PC-9 (cell line): ENCODE measurements at regions of chr17 and their contacts with region 1.

Region 1: DNA sequence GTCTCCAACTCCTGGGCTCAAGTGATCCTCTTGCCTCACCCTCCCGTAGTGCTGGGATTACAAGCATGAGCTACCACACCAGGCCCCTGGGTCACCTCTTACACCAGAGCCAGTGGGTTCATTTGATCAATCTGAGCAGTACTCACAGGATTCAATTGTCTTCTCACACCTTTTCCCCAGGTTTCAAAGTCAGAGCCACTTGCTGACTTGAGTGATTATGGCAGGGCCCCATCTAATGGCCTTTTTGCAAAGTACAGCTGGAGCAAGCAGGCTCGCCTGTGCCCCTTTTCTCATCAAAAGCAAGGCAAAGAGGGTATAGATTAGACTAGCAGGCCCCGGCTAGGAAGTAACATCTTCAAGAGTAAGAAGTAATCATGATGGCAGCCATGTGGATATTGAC is 114.8 kb upstream of the NOL11 start:
- DNase-seq: peak in 1 of 2 experiments; percentile 41
- H3K4me3 ChIP-seq: no peak overlapping the region
- H3K27ac ChIP-seq: no peak overlapping the region
- H3K4me1 ChIP-seq: no peaks in the 10 kb centered on the region
- H3K27me3 ChIP-seq: no peaks in the 10 kb centered on the region
- CTCF ChIP-seq: peak; percentile 75

Region 2: DNA sequence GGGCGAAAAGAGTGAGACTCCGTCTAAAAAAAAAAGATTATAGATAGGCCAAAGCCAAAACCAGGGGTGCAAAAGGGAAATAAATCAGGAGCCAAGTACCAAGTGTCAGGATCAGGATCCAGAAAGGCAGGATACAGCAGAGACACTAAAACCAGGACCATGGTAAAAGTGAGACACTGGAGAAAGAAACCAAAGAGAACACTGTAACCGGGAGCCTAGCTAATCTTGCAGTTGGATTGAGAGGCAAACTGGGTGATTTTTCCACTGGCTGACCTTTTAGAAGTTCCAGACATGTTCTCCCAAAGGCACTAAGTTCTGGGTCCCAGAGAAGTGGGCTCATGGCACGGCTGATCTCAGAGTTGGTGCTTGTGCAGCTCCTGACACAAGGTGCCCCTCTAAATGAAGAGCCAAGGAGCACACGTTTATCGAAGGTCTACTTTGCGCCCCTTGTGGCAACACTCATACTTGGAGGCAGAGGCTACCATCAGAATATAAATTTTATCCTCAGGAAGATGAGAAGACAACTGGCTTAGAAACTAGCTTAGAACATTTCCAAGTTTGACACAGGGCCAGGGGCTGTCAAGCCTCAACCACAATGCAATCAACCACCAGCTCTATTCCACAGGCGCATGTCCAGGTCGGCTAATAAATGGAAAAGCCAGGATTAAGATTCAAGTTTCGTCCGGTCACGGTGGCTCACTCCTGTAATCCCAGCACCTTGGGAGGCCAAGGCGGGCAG is 330.5 kb before region 1 on chr17:
- CTCF ChIA-PET with region 1: no interaction called
- POLR2A ChIA-PET with region 1: no interaction called
- intact Hi-C with region 1: loop called (anchors 10 kb)
- DNase-seq: no peak
- H3K4me3 ChIP-seq: no peak overlapping the region
- H3K27ac ChIP-seq: no peak overlapping the region
- H3K4me1 ChIP-seq: no peaks in the 10 kb centered on the region
- H3K27me3 ChIP-seq: no peaks in the 10 kb centered on the region
- CTCF ChIP-seq: peak; percentile 44; the same call in 1 of the 2 replicates

Region 3: DNA sequence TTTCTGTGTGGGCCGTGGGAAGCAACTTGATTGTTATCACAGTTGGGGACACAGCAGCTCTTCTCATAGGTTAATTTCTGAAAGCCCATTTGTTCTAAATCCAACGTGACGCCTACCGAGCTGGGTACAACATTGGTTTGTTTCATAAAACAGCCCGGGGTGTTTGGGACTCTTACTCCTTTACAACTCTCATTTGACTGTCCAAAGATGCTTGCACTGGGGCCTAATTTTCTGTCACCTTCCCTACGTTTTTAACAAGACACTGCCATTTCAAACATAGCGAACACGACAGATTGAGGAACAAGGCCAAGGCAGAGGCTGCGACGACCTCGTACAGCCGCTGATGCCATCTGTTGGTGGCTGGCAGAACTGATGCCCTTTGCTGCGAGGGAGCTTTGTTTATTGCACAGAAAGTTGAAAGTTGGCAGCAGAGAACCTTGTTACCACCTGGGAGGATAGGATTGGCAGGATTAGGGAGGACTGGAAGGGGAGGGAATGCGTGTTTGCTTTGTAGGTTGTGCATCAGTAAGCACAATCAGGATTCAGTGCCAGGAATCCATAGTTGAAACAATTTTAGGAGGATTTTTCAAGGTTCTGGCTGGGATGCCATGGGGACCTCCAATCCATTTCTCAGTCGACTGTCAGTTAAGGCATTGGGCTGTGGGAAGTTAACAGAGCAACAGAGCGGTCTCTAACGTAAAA is 127.6 kb before region 1 on chr17:
- CTCF ChIA-PET with region 1: interaction called, 3 read pairs
- POLR2A ChIA-PET with region 1: no interaction called
- intact Hi-C with region 1: loop called (anchors 5 kb)
- DNase-seq: peak; percentile 53 to 67
- H3K4me3 ChIP-seq: no peak overlapping the region
- H3K27ac ChIP-seq: no peak overlapping the region
- H3K4me1 ChIP-seq: no peaks in the 10 kb centered on the region
- H3K27me3 ChIP-seq: no peaks in the 10 kb centered on the region
- CTCF ChIP-seq: peak; percentile 92

Region 4: GRCh38 chr17:67491009-67491680 is 111.8 kb before region 1 on chr17:
- CTCF ChIA-PET with region 1: no interaction called
- POLR2A ChIA-PET with region 1: no interaction called
- intact Hi-C with region 1: loop called (anchors 5 kb)
- DNase-seq: peak; percentile 77 to 83
- H3K4me3 ChIP-seq: peak overlapping the region; percentile 50; the same call in 1 of the 2 replicates
- H3K27ac ChIP-seq: no peak overlapping the region
- H3K4me1 ChIP-seq: peaks cover 8% of the 10 kb centered on the region
- H3K27me3 ChIP-seq: no peaks in the 10 kb centered on the region
- CTCF ChIP-seq: no peak

Region 5: DNA sequence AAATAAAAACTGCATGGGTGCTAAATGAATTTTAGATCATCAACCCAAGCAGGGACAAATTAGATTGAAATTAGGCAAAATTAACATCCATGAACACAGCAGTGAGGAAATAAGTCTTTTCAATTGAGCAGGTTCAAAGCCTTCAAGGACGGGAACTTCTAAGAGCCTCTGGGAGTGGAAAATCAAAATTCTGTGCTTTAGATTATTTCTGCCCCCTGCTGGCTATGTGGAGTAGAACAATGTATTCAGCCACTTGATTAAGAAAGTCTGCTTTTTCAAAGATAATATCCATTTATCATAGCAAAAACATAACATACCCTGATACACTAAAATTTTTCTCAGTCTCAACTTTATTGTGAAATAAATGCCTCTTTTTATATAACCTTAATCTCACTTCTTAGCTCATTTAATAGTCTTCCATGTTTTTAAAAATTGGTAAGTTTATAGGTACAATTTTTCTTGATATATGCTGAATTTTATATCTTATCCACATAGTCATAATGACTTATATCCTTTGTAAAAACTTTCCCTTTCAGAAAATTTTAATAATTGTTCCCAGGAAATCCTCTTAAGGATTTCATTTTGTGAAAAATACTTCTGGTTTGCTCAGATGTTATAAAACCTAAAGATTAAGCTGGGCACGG is 86.7 kb after region 1 on chr17:
- CTCF ChIA-PET with region 1: no interaction called
- POLR2A ChIA-PET with region 1: no interaction called
- intact Hi-C with region 1: loop called (anchors 1 kb)
- DNase-seq: peak; percentile 24 to 51
- H3K4me3 ChIP-seq: no peak overlapping the region
- H3K27ac ChIP-seq: no peak overlapping the region
- H3K4me1 ChIP-seq: no peaks in the 10 kb centered on the region
- H3K27me3 ChIP-seq: no peaks in the 10 kb centered on the region
- CTCF ChIP-seq: peak; percentile 88

Region 6: DNA sequence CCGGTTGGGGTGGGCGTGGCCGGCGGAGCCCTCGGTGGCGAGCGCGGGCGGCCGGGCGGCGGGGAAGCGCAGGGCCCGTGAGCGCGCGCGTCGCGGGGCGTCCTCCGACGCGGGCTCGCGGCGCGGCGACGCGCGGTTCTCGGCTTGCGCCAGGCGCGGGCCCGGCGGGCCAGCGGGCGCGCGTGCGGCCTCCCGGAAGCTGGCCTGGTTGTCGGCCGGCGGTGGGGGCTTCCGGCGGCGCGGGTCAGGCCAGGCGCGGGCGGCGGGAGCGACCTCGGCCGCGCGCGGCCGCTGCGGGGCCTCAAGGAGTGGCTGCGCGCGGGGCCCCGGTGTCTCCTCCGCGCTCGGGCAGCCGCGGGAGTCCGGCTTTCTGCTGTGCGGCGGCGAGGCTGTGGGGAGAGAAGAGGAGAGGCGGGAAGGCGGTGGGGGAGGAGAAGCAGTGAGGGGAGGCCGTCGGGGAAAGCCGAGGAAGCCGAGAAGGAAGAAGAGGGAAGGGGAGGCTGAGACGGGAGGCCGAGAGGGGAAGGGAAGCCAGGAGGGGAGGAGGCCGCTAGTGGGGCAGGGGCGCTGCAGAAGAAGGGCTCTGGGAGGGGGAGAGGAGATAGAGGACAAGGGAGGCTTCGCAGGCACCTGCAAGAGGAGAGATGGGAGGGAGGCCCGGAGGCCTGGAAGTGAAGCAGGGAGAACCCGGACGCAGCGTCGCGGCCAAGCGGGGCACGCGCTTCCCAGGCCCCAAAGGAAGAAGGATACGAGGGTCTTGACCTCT is 390.8 kb after region 1 on chr17:
- CTCF ChIA-PET with region 1: no interaction called
- POLR2A ChIA-PET with region 1: no interaction called
- intact Hi-C with region 1: no loop called
- DNase-seq: peak in 1 of 2 experiments; percentile 86
- H3K4me3 ChIP-seq: peak overlapping the region; percentile 63
- H3K27ac ChIP-seq: peak overlapping the region; percentile 78
- H3K4me1 ChIP-seq: peaks cover 29% of the 10 kb centered on the region
- H3K27me3 ChIP-seq: no peaks in the 10 kb centered on the region
- CTCF ChIP-seq: no peak

Region 7: GRCh38 chr17:68390888-68391545 is 788.1 kb after region 1 on chr17:
- CTCF ChIA-PET with region 1: interaction called, 11 read pairs
- POLR2A ChIA-PET with region 1: no interaction called
- intact Hi-C with region 1: no loop called
- DNase-seq: no peak
- H3K4me3 ChIP-seq: no peak overlapping the region
- H3K27ac ChIP-seq: no peak overlapping the region
- H3K4me1 ChIP-seq: no peaks in the 10 kb centered on the region
- H3K27me3 ChIP-seq: no peaks in the 10 kb centered on the region
- CTCF ChIP-seq: no peak